HEK293 (cell line): ENCODE measurements at regions of chr7 and their contacts with region 1.

Region 1: GRCh38 chr7:23055582-23056178 is 41.8 kb upstream of the HYCC1 start:
- H3K4me3 ChIP-seq: no peak overlapping the region
- H3K27ac ChIP-seq: no peak overlapping the region
- H3K4me1 ChIP-seq: no peaks in the 10 kb centered on the region
- CTCF ChIP-seq: 0 out of 2 replicates have a peak, but pooled peaks have one; percentile 38

Region 2: DNA sequence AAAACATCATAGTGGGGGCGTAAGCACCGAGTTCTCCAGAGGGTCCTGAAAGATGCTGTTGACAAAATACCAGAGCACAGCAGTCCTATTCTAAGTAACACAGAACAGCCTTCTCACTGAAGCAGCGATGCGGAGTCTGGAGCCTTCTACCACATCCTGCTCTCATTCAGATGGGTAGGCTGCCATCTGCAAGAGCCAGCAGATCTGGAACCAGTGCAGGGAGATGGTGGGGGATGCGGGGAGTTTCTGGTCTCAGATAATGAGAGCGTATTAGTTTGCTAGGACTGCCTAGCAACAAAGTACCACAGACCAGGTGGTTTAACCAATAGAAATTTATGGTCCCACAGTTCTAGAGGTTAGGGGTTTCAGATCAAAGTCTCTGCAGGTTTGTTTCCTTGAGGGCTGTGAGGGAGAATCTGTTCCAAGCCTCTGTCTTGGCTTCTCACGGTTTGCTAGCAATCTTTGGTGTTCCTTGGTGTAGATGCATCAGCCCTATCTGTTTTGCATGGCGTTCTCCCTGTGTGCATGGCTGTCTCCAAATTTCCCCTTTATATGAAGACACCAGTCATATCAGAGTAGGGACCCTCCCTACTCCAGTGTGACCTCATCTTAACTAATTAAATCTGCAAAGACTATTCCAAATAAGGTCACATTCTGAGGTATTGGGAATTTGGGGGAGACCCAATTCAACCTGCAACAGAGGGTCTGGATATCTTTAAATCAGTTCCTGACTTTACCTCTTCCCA is 503.7 kb before region 1 on chr7:
- CTCF ChIA-PET with region 1: interaction called, 12 read pairs
- POLR2A ChIA-PET with region 1: no interaction called
- H3K4me3 ChIP-seq: no peak overlapping the region
- H3K27ac ChIP-seq: no peak overlapping the region
- H3K4me1 ChIP-seq: peaks cover 10% of the 10 kb centered on the region
- CTCF ChIP-seq: no peak

Region 3: GRCh38 chr7:22726345-22727185 is 329.1 kb before region 1 on chr7:
- CTCF ChIA-PET with region 1: interaction called, 34 read pairs
- POLR2A ChIA-PET with region 1: no interaction called
- H3K4me3 ChIP-seq: peak overlapping the region; percentile 8
- H3K27ac ChIP-seq: no peak overlapping the region
- H3K4me1 ChIP-seq: peaks cover 8% of the 10 kb centered on the region; the same call in 1 of the 2 replicates
- CTCF ChIP-seq: peak; percentile 49

Region 4: DNA sequence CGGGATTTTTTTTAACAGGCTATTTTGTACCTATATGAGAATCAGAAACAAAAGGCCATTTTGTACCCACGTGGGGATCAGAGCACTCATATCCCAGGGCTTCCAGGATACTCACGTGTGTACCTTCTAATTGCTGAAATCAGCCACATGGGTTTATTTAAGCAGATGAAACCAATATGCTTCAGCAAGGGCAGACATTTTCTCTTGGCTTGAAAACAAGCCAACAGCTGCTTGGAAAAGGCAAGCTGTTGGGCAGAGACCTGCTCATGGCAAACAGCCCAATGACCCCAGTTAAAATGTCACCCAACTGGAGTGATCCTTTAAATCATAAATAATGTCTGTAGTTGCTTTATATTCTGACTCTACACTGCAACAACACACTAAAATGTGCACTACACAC is 206.5 kb before region 1 on chr7:
- CTCF ChIA-PET with region 1: interaction called, 13 read pairs
- POLR2A ChIA-PET with region 1: no interaction called
- H3K4me3 ChIP-seq: no peak overlapping the region
- H3K27ac ChIP-seq: no peak overlapping the region
- H3K4me1 ChIP-seq: no peaks in the 10 kb centered on the region; the same call in 1 of the 2 replicates
- CTCF ChIP-seq: no peak

Region 5: DNA sequence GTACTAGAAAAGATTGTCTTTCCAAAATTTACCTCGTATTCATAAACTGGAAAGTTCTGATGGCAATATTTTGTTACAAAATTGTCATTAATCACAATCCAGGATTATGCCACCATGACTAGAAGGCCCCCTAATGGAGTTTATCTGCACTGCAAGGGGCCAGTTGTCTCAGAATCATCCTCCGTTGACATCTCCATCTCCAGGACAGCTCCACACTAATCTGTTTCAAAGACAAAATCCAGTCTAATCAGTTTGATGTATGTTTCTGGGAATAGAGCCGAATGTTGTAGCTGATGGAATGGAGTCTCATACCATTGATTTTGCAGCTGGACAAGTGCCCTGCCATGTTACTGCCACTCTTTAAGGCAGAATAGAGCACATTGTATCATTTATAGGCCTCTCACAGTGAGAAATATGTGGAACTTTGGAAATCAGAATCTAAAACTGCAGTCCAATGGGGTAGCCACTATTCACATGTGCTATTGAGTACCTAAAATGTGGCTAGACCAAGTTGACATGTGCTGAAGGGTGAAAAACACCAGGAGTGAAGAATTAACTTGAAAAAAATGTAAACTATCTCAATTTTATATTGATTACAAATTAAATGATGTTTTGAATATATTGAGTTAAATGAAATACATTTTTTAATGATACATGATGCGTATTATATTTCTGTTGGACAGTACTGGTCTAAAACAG is 194.7 kb before region 1 on chr7:
- CTCF ChIA-PET with region 1: interaction called, 12 read pairs
- POLR2A ChIA-PET with region 1: no interaction called
- H3K4me3 ChIP-seq: no peak overlapping the region
- H3K27ac ChIP-seq: no peak overlapping the region
- H3K4me1 ChIP-seq: no peaks in the 10 kb centered on the region
- CTCF ChIP-seq: no peak

Region 6: DNA sequence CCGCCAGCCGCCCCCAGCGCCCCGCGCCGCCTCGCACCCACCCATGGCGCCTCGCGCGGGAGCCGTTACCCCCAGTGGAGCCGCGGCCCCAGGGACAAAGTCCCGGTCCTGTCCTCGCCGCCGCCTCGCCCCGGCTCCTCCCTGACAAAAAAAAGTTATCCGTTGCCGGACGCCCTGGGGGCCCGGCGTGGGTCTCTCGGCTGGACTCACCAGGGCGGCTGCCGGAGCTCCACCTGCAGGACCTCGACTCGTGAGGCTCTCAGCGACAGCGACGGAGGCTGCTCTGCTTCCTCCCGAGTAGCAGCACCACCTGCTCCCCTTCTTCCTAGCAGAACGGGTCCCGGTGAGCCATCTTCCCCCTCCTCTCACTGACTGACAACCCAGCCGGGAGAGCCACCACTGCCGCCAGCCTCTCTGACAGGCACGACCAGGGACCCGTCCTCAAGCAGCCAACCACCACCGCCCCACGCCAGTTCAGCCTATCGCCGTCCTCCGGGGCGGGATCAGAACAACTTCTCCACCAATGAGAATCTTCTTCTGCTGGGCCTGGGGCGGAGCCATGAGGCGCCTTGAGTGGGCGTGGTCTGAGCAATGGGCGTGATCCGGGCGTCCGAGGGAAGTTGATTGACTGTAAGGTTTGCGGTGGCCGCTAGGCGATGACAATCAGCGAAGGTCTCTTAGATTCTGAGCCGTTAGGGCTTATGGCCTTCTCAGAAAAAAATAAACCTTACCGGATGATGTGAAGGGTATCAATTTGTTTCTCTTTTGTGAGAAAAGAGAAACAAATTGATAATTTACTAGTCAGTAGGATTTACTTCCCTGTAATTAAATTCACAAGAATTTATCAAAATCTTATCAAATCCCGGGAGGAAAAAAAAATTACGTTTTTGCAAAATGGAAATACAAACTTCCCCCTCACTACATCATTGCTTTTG is 41.7 kb before region 1 on chr7 and contains the start of gene HYCC1:
- CTCF ChIA-PET with region 1: interaction called, 11 read pairs
- POLR2A ChIA-PET with region 1: no interaction called
- H3K4me3 ChIP-seq: peak within 1 kb of the TSS; percentile 69
- H3K27ac ChIP-seq: peak within 1 kb of the TSS; percentile 68
- H3K4me1 ChIP-seq: peaks cover 5% of the 10 kb centered on the region; the same call in 1 of the 2 replicates
- CTCF ChIP-seq: 0 out of 2 replicates have a peak, but pooled peaks have one; percentile 13

Region 7: GRCh38 chr7:23043441-23043840 is 12.2 kb before region 1 on chr7:
- CTCF ChIA-PET with region 1: interaction called, 24 read pairs
- POLR2A ChIA-PET with region 1: no interaction called
- H3K4me3 ChIP-seq: no peak overlapping the region
- H3K27ac ChIP-seq: no peak overlapping the region
- H3K4me1 ChIP-seq: no peaks in the 10 kb centered on the region
- CTCF ChIP-seq: no peak

Region 8: GRCh38 chr7:23315366-23315765 is 259.7 kb after region 1 on chr7:
- CTCF ChIA-PET with region 1: no interaction called
- POLR2A ChIA-PET with region 1: no interaction called
- H3K4me3 ChIP-seq: no peak overlapping the region
- H3K27ac ChIP-seq: peak overlapping the region; percentile 58; the same call in 1 of the 2 replicates
- H3K4me1 ChIP-seq: peaks cover 18% of the 10 kb centered on the region
- CTCF ChIP-seq: no peak

Region 9: DNA sequence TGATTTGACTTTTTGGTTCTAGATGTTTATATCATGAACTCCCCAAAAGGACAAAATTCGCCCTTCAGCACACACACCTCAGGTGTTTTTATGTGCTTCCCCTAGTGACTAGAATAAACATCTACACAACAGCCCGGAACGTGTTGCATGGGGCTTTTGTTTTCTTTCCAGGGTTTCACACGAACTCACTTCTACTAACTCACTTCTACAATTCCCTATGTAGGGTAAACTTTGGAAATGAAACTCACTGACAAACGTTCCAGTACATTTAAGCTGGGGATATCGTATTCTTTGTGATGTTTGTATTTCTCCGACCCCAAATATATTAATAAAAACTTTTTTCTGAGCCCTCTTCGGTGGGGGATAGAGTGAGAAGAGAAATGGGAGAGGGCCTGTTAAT is 474.7 kb after region 1 on chr7:
- CTCF ChIA-PET with region 1: no interaction called
- POLR2A ChIA-PET with region 1: no interaction called
- H3K4me3 ChIP-seq: peak overlapping the region; percentile 92
- H3K27ac ChIP-seq: no peak overlapping the region
- H3K4me1 ChIP-seq: peaks cover 25% of the 10 kb centered on the region
- CTCF ChIP-seq: no peak

Region 10: GRCh38 chr7:23721456-23721855 is 665.8 kb after region 1 on chr7:
- CTCF ChIA-PET with region 1: no interaction called
- POLR2A ChIA-PET with region 1: no interaction called
- H3K4me3 ChIP-seq: no peak overlapping the region
- H3K27ac ChIP-seq: no peak overlapping the region
- H3K4me1 ChIP-seq: peaks cover 6% of the 10 kb centered on the region
- CTCF ChIP-seq: no peak